Stomach (tissue), 19 donors: ENCODE measurements at regions of chr1 and their contacts with region 1.

Region 1: DNA sequence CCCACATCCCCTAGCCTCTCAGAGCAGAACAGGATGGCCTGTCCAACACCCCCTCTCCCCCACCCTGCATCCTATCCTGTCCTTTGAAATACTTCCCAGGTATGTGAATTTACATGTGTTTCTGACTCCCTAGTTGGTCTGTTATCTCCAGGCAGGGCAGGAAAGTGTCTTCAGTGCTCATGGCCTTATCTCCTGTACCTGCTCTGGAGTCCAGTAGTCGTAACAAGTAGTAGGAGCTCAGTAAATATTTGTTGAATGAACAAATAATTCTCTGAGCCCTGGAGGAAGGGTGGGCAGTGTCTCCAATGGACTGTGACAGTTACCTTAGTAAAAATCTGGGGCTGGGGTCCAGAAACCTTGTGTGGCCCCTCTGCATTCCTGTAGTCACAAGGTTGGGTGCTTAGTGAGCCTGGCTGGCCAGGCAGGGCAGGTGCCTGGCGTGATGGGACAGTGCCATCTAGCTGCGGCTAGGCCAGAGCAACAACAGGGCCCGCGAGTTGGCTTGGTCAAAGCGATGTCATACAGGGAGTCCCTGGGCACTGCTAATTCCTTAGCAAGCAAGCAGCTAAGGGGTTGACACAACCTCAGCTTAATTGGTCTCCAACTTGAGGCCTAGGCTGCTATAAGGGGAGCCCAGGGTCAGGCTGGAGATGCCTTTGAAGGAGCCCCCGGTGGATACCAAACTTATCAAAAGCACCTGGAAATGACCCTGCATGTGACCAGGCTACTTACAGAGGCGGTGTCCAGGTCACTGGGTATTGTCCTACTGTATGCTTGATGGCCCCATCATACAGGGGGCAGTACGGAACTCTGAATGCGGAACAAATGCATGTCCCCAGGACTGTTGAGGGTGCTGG is 89.0 kb upstream of the PPM1J start:
- DNase-seq: peak; percentile 80 to 91
- H3K4me3 ChIP-seq: no peak overlapping the region
- H3K27ac ChIP-seq: no peak overlapping the region
- H3K4me1 ChIP-seq: peaks cover 0 to 2% (median 0%) of the 10 kb centered on the region in 4 donors
- H3K27me3 ChIP-seq: peaks cover 0 to 6% (median 0%) of the 10 kb centered on the region in 3 donors
- CTCF ChIP-seq: peak in 5 of 7 experiments; percentile 22 to 70 (median 60)
- EP300 ChIP-seq: no peak
- POLR2A ChIP-seq: no peak

Region 2: DNA sequence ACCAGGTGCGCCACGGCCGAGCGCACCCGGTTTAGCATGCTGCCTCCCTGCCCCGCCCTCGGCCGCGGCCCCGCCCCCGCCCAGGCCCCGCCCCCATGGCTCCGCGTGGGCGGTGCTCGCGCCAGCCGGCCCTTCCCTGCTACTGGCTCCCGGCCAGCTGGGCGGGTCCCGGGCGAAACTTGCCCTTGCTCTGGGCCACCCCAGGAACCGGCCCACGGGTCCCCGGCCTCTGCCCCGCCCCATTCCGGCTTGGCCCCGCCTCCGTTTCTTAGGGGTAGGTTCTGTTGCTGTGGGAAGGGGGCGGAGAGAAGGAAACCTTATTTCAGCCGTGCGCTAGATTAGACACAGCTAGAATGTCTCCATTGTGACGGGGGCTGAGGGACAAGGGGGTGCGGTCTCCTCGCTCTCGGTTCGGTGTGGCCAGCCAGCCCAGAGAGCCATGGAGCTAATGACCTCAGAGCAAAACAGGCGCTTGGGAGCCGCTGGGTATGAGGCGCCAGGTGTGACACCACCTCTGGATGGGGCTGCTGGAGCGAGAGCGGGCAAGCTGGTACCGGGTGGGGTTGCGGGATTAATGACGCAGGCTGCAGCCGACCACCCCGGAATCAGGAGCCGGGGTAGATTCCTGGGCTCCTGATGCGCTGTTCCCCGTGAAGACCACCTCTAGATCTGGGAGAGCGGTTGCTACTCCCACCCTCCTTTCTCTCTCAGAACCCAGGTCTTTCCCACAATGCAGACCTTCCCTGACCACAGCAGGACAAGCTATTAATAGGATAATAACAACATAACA is 88.7 kb before region 1 on chr1 and contains the start of gene PPM1J:
- intact Hi-C with region 1: loop called (anchors 5 kb)
- DNase-seq: peak; percentile 98 to 100
- H3K4me3 ChIP-seq: peak within 1 kb of the TSS; percentile 67 to 86 (median 70)
- H3K27ac ChIP-seq: peak within 1 kb of the TSS; percentile 58 to 81 (median 76)
- H3K4me1 ChIP-seq: peaks cover 22 to 43% (median 39%) of the 10 kb centered on the region in 4 donors
- H3K27me3 ChIP-seq: peaks cover 0 to 23% (median 0%) of the 10 kb centered on the region in 3 donors
- CTCF ChIP-seq: no peak
- EP300 ChIP-seq: no peak
- POLR2A ChIP-seq: no peak
- total RNA-seq, gene PPM1J: 0.87 to 1.3 TPM in 2 of 5 donors, not detected in the others

Region 3: DNA sequence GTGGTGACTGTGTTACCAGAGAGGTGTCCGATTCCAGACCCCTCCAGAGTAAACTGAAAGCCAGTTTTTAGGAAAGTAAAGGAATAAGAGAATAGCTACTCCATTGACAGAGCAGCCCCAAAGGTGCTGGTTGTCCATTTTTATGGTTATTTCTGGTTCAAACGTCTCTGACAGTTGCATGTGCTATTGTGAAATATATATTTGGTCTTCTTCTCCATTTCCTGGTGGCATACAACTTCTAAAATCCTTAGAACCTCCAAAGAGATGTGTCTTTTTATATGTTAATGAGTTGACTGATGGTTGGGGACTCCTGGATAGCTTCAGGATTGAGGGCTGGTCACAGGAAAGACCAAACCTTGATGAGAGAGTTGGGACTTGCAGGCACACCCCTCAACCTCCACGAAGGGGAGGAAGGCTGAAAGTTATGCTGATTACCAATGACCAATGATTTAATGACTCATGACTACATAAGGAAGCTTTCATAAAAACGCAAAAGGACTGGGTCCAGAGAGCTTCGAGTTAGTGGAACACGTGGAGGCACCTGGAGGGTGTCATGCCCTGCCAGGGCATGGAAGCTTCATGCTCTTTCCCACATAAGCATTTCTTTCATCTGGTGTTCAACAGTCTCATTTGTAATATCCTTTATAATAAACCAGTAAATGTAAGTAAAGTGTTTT is 51.2 kb after region 1 on chr1:
- intact Hi-C with region 1: no loop called
- DNase-seq: no peak
- H3K4me3 ChIP-seq: peak overlapping the region in 3 of 4 donors; percentile 29 to 45 (median 35)
- H3K27ac ChIP-seq: no peak overlapping the region
- H3K4me1 ChIP-seq: peaks cover 0 to 11% (median 4%) of the 10 kb centered on the region in 4 donors
- H3K27me3 ChIP-seq: peaks cover 0 to 29% (median 28%) of the 10 kb centered on the region in 3 donors
- CTCF ChIP-seq: no peak
- EP300 ChIP-seq: no peak
- POLR2A ChIP-seq: no peak

Region 4: DNA sequence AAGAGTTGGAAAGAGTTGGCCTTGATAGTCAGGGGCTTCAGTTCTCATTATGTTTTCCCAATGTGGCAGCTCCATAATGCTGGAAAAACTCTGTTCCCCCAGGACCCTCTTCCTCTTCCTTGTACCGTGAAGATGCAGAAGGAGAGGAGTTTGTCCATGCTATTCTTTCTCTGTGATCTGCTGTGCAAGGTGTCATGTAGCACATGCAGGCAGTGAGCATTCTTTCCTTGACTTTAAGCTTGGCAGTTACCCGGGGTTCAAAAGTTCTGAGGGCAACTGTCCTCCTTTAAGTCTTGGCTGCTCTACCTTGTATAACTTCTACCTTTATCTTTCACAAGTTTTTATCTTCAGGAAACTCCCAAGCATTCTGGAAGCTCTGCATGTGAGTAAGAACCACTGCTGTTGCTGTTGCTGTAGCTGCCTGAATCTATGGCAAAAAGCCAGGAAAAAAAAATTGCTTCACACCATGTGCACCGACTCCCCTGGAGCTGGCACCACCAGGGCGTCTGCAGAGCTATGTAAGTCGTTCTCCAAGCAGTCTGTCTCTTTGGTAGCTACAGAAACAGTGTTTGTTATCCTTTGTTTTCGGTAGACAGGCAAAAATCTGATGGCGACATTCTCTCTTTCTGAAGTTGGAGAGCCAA is 194.6 kb after region 1 on chr1:
- intact Hi-C with region 1: no loop called
- DNase-seq: peak; percentile 55 to 89
- H3K4me3 ChIP-seq: no peak overlapping the region
- H3K27ac ChIP-seq: peak overlapping the region; percentile 57 to 79 (median 72)
- H3K4me1 ChIP-seq: peaks cover 0 to 57% (median 25%) of the 10 kb centered on the region in 4 donors
- H3K27me3 ChIP-seq: no peaks in the 10 kb centered on the region
- CTCF ChIP-seq: no peak
- EP300 ChIP-seq: no peak
- POLR2A ChIP-seq: no peak

Region 5: GRCh38 chr1:113283914-113284313 is 479.8 kb after region 1 on chr1:
- intact Hi-C with region 1: no loop called
- DNase-seq: no peak
- H3K4me3 ChIP-seq: no peak overlapping the region
- H3K27ac ChIP-seq: no peak overlapping the region
- H3K4me1 ChIP-seq: peaks cover 0 to 9% (median 3%) of the 10 kb centered on the region in 4 donors
- H3K27me3 ChIP-seq: no peaks in the 10 kb centered on the region
- CTCF ChIP-seq: no peak
- EP300 ChIP-seq: no peak
- POLR2A ChIP-seq: no peak